Activated CD4-positive, alpha-beta memory T cell treated with anti-CD3 and anti-CD28 coated beads for 36 hours (primary cell): ENCODE measurements at regions of chr18 and their contacts with region 1.

Region 1: GRCh38 chr18:9117980-9118841 is 15.7 kb downstream of the NDUFV2 start:
- DNase-seq: no peak
- H3K4me3 Mint-ChIP-seq: peak overlapping the region; percentile 72
- H3K27ac Mint-ChIP-seq: peak overlapping the region; percentile 97
- H3K4me1 Mint-ChIP-seq: peaks cover 81% of the 10 kb centered on the region
- H3K27me3 Mint-ChIP-seq: no peaks in the 10 kb centered on the region

Region 2: GRCh38 chr18:9088252-9088651 is 30.0 kb before region 1 on chr18:
- CTCF ChIA-PET with region 1: interaction called, 14 read pairs
- POLR2A ChIA-PET with region 1: interaction called, 61 read pairs
- intact Hi-C with region 1: loop called (anchors 1 kb)
- DNase-seq: no peak
- H3K4me3 Mint-ChIP-seq: peak overlapping the region; percentile 73
- H3K27ac Mint-ChIP-seq: peak overlapping the region; percentile 100
- H3K4me1 Mint-ChIP-seq: peaks cover 68% of the 10 kb centered on the region
- H3K27me3 Mint-ChIP-seq: no peaks in the 10 kb centered on the region

Region 3: DNA sequence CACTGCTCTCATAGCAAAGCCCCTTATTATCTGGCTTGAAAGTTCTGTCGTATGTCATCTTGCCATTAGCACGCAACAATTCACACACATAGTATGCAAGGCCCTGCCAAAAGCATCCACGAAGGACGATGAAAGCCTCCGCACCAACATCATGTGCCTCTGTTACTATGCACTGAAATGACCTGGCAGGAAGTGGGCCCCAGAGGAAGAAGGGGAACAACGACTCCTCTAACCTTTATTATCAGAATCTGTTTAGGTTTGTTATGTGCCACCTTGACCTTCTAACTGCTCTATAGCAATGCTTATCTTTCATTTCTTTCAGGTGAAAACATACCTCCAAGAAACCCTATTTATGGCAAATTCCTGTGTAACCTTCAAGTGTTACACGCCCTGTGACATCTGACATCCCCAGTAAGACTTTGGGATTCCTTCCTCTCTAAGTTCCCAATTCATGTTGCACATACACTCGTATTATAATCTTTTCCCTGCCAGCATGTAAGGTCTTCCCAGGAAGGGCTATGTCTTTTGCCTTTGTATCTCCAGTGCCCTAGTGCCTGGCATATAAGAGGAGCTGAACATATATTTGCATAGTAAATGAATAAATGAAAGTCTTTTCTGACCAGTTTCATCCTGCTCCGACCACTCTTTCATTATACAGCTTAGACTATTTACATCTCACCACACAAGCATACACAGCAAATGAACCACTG is 22.8 kb before region 1 on chr18:
- CTCF ChIA-PET with region 1: interaction called, 3 read pairs
- POLR2A ChIA-PET with region 1: interaction called, 109 read pairs
- intact Hi-C with region 1: loop called (anchors 1 kb)
- DNase-seq: peak; percentile 87
- H3K4me3 Mint-ChIP-seq: peak overlapping the region; percentile 68
- H3K27ac Mint-ChIP-seq: peak overlapping the region; percentile 100
- H3K4me1 Mint-ChIP-seq: peaks cover 68% of the 10 kb centered on the region
- H3K27me3 Mint-ChIP-seq: no peaks in the 10 kb centered on the region

Region 4: DNA sequence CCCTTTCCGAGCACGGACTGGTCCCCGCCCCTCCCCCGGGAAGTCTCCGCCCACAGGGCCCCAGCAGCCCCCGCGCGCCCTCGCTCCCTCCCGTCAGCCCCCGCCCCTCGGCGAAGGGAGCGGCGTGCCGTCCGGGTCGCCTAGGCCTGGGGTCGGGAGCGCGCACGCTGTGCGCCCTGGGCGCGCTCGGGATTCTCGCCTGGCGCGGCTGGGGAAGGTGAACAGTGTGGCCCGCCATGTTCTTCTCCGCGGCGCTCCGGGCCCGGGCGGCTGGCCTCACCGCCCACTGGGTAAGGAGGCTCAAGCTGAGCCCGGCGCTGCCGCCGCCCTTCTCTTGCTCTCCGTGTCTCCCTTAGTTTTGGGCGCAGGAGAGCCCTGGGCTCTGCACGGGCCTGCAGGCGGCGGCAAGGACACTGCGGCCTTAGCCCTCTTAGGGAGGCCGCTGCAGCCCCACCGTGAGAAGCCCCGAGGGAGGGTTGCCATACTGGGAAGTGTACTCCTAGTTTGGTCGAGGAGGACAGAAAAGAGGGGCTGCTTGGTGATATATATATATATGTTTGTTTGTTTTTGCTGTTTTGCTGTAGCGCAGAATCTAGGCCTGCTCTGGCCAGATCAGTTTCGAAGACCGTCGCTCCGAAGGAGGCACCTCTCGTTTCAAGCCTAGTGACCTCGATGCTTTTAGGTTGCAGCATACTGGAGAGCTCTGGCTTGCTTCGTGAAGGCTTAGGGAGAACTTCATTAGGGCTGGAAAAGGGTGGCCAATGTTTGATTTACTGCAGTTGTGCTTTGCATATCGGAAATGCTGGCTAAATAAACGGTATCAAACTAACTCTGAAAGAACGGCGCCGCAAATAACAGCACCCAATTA is 15.5 kb before region 1 on chr18 and contains the start of gene NDUFV2:
- CTCF ChIA-PET with region 1: interaction called, 28 read pairs
- POLR2A ChIA-PET with region 1: interaction called, 109 read pairs
- intact Hi-C with region 1: loop called (anchors 1 kb)
- DNase-seq: peak; percentile 99
- H3K4me3 Mint-ChIP-seq: peak within 1 kb of the TSS; percentile 90
- H3K27ac Mint-ChIP-seq: peak within 1 kb of the TSS; percentile 95
- H3K4me1 Mint-ChIP-seq: peaks cover 39% of the 10 kb centered on the region
- H3K27me3 Mint-ChIP-seq: no peaks in the 10 kb centered on the region
- total RNA-seq, gene NDUFV2: 535 to 552 TPM

Region 5: GRCh38 chr18:9156604-9157249 is 38.5 kb after region 1 on chr18:
- CTCF ChIA-PET with region 1: no interaction called
- POLR2A ChIA-PET with region 1: no interaction called
- intact Hi-C with region 1: no loop called
- DNase-seq: no peak
- H3K4me3 Mint-ChIP-seq: no peak overlapping the region
- H3K27ac Mint-ChIP-seq: peak overlapping the region; percentile 72
- H3K4me1 Mint-ChIP-seq: peaks cover 72% of the 10 kb centered on the region
- H3K27me3 Mint-ChIP-seq: no peaks in the 10 kb centered on the region